ENCODE measurements at regions of chr1 and their contacts with region 1.

Region 1: GRCh38 chr1:184051485-184052193 is at the start of gene TSEN15:
- DNase-seq: peak; percentile 69
- H3K4me3 Mint-ChIP-seq: peak within 1 kb of the TSS; percentile 100
- H3K27ac Mint-ChIP-seq: peak within 1 kb of the TSS; percentile 96
- H3K4me1 Mint-ChIP-seq: peaks cover 30% of the 10 kb centered on the region
- H3K27me3 Mint-ChIP-seq: peaks cover 31% of the 10 kb centered on the region
- total RNA-seq, gene TSEN15: 35.1 TPM in 2 replicates

Region 2: DNA sequence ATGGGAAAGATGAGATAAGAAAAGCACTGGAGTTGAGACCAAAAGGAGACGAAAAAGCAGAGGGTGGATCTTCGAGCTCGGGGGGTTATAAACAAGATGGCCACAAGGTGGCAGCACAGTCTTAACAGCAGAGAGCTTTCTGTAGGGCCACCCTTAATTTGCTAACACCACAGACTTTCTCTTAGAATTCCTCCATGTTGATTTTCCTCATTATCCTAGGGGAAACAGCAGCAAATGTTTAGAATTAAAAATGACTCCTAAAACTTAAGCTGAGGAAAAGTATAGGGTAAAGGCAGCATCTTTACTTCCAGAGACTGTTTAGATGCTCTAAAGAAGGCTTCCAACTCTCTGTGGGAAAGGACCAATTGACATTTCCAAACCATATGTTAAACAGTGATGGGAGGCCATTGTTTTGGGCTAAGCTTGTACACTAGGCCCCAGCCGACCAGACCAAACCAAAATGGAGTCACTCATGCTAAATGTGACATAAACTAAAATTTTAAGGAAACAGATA is 396.0 kb before region 1 on chr1:
- intact Hi-C with region 1: loop called (anchors 5 kb)
- DNase-seq: peak; percentile 44
- H3K4me3 Mint-ChIP-seq: no peak overlapping the region
- H3K27ac Mint-ChIP-seq: no peak overlapping the region
- H3K4me1 Mint-ChIP-seq: peaks cover 38% of the 10 kb centered on the region
- H3K27me3 Mint-ChIP-seq: no peaks in the 10 kb centered on the region

Region 3: DNA sequence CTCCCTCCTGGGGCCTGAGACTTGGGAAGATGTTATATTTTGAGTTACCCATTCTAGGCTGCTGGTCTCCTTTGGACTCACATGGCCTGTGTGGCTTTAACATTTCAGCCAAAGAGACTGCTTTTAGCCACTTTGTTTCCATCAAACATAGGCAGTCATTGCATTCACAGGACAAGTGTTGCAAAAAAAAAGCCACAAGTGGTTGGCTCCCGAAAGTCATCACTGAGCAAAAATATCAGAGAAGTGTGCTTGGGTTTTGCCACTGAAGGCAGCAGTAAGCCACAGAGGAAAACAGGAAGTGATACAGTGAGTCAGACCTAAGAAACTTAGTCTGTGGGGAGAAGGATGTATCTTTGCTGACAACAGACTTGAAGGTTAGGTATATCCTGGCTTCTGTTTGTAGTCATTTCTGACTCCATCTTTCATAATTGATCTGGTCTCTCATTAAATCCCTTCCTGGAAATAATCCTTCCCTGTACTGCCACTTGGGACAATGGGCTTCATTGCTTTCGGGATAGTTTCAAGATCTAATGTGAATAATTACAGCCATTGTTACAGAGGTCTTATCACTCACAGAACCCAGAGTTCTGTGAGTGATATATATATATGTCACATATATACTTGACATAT is 95.0 kb before region 1 on chr1:
- intact Hi-C with region 1: loop called (anchors 2 kb)
- DNase-seq: peak; percentile 63
- H3K4me3 Mint-ChIP-seq: no peak overlapping the region
- H3K27ac Mint-ChIP-seq: peak overlapping the region; percentile 88
- H3K4me1 Mint-ChIP-seq: peaks cover 18% of the 10 kb centered on the region
- H3K27me3 Mint-ChIP-seq: no peaks in the 10 kb centered on the region

Region 4: DNA sequence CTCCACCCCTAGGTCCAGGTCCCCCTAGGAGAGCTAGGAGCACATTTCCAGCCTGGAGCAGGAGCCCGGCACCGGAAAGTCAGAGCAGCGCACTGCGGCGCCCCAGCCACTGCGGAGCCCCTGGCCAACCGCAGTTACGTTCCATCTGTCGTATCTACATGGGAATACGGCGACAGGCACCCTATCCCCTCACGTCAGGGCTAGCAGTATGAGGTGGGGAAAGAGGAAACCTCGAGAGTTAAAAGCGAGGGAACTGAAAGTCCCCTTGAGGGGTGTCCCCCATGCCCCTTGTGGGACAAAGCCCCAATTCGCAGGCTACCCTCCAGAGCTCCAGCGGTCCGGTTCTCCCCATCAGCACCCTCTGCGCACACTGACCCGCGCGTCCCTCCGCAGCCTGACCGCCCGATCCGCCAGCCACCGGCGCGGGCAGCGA is 15.1 kb before region 1 on chr1:
- intact Hi-C with region 1: loop called (anchors 2 kb)
- DNase-seq: no peak
- H3K4me3 Mint-ChIP-seq: peak overlapping the region; percentile 48
- H3K27ac Mint-ChIP-seq: no peak overlapping the region
- H3K4me1 Mint-ChIP-seq: peaks cover 19% of the 10 kb centered on the region
- H3K27me3 Mint-ChIP-seq: peaks cover 74% of the 10 kb centered on the region

Measured in activated T-helper 2 cell treated with anti-CD3 and anti-CD28 coated beads, Interferon-gamma antibody, Interleukin-2, Interleukin-4, amounts not matched to agents 10 μg/mL and 5 μg/mL and 100 μg/mL, durations not matched to agents 14 hours and 24 hours and 36 hours (primary cell).